ENCODE measurements at regions of chr15 and their contacts with region 1.

Region 1: DNA sequence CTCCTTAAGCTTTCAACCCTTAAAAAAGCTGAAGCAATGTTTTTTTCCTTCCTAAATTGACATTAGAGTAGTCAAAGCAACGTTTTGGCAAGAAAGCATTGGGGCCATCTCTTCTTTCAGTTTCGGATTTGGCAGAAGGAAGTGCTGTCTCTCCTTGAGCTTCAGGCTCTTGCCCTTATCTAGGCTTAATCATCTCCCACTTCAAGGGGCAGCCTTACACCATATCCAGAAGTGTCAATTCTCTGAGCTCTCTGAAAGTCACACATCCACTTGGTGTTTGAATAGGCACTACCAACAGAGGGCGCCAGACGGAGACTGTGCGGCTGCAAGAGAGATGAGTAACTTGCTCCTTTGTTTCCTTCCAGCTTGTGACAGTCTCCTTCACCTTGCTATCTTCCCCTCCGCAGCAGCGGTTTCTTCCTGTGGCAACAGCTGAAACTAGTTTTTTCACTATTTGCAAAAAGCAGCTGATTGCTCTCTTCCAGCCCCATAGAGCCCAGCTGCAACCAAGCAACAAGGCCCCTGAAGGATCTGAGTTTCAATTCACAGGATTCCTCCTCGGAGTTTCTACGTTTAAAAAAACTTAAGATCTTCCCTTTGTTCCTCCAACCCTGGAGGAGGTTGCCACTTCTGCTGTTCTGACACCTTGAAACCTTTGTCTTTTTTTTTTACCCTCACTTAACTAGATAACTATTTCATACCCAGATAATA is 147.0 kb upstream of the SLCO3A1 start:
- H3K4me3 ChIP-seq: no peak overlapping the region
- H3K27ac ChIP-seq: no peak overlapping the region
- H3K4me1 ChIP-seq: no peaks in the 10 kb centered on the region
- CTCF ChIP-seq: 0 out of 2 replicates have a peak, but pooled peaks have one; percentile 19

Region 2: GRCh38 chr15:91302588-91303439 is 403.7 kb before region 1 on chr15:
- CTCF ChIA-PET with region 1: interaction called, 33 read pairs
- POLR2A ChIA-PET with region 1: no interaction called
- H3K4me3 ChIP-seq: no peak overlapping the region
- H3K27ac ChIP-seq: no peak overlapping the region
- H3K4me1 ChIP-seq: no peaks in the 10 kb centered on the region
- CTCF ChIP-seq: peak; percentile 58

Region 3: GRCh38 chr15:91689377-91689776 is 17.1 kb before region 1 on chr15:
- CTCF ChIA-PET with region 1: interaction called, 23 read pairs
- POLR2A ChIA-PET with region 1: no interaction called
- H3K4me3 ChIP-seq: no peak overlapping the region
- H3K27ac ChIP-seq: no peak overlapping the region
- H3K4me1 ChIP-seq: no peaks in the 10 kb centered on the region
- CTCF ChIP-seq: no peak

Region 4: DNA sequence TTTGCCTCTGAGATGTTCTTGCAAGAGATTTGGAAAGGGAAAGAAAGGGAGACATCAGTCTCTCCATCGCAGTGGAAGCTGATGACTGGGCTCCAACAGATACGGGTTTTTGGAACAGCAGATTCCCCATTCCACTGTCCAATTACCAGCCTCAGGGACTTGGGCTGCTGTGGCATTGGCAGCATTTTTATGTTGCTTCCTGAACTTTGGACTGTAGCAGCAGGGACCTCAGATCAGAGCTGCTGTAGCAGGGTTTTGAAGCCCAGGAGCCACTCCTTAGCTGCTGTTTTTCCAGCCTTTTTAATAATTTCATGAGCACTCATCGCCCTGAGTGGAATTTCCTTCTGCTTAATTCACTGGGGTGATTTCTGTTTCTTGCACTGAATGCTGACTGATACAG is 11.3 kb after region 1 on chr15:
- CTCF ChIA-PET with region 1: interaction called, 38 read pairs
- POLR2A ChIA-PET with region 1: no interaction called
- H3K4me3 ChIP-seq: no peak overlapping the region
- H3K27ac ChIP-seq: no peak overlapping the region
- H3K4me1 ChIP-seq: no peaks in the 10 kb centered on the region
- CTCF ChIP-seq: no peak

Region 5: DNA sequence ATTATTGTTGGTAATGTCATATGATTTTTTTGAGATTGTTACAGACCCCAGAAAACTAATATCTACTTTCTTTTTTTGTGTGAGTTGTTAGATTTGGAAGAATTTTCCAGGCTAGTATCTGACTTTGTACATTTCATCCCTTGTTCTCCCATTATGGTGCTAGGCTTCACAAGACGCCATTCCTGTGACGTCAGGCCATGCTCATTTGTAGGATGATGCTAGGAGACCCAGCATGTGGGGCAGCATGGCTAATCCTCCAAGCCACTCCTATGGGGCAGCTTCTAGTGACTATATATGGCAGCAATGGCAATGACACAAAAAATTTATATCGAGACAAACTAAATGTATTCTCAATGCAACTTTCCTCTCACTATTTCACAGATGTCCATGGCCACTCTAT is 25.0 kb after region 1 on chr15:
- CTCF ChIA-PET with region 1: interaction called, 38 read pairs
- POLR2A ChIA-PET with region 1: no interaction called
- H3K4me3 ChIP-seq: no peak overlapping the region
- H3K27ac ChIP-seq: no peak overlapping the region
- H3K4me1 ChIP-seq: no peaks in the 10 kb centered on the region
- CTCF ChIP-seq: no peak

Region 6: GRCh38 chr15:92077353-92078085 is 371.0 kb after region 1 on chr15:
- CTCF ChIA-PET with region 1: interaction called, 72 read pairs
- POLR2A ChIA-PET with region 1: no interaction called
- H3K4me3 ChIP-seq: no peak overlapping the region
- H3K27ac ChIP-seq: no peak overlapping the region
- H3K4me1 ChIP-seq: no peaks in the 10 kb centered on the region
- CTCF ChIP-seq: peak; percentile 49